ENCODE measurements at regions of chrX and their contacts with region 1.

Region 1: DNA sequence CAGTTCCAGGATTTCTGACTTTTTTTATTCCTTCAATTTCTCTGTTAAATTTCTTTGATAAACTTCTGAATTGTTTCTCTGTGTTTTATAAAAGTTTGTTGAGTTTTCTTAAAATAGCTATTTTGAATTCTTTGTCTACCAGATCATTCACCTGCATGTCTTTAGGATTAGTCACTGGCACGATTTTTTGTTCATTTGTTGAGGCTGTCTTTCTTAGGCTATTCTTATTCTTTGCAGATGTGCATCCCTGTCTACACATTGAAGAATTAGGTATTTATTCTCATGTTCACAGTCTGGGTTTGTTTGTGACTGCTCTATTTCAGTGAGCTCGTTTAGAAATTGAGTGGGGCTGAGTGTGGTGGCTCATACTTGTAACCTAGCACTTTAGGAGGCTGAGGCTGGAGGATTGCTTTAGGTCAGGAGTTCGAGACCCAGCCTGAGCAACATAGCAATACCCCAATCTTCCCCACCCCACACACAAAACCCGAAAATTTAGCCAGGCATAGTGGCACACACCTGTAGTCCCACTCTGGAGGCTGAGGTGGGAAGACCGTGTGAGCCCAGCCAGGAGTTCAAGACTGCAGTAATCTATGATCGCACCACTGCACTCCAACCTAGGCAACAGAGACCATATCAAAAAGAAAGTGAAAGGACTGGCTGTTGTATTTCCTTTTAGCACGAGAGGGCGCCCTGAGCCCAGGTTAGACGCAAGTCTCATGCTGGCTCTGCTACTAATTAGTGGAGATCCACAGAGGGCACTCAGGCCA is 42.0 kb downstream of the F8 start:
- DNase-seq: peak; percentile 47
- ATAC-seq: peak; percentile 99
- H3K4me3 Mint-ChIP-seq: peak overlapping the region; percentile 73
- H3K27ac Mint-ChIP-seq: no peak overlapping the region
- H3K4me1 Mint-ChIP-seq: peaks cover 5% of the 10 kb centered on the region
- H3K27me3 Mint-ChIP-seq: no peaks in the 10 kb centered on the region
- CTCF ChIP-seq: no peak

Region 2: GRCh38 chrX:155026726-155027508 is 46.4 kb after region 1 on chrX and contains the start of gene FUNDC2:
- CTCF ChIA-PET with region 1: no interaction called
- POLR2A ChIA-PET with region 1: no interaction called
- intact Hi-C with region 1: loop called (anchors 1 kb)
- DNase-seq: peak; percentile 83
- ATAC-seq: peak; percentile 86
- H3K4me3 Mint-ChIP-seq: peak within 1 kb of the TSS; percentile 87
- H3K27ac Mint-ChIP-seq: peak within 1 kb of the TSS; percentile 93
- H3K4me1 Mint-ChIP-seq: peaks cover 21% of the 10 kb centered on the region
- H3K27me3 Mint-ChIP-seq: no peaks in the 10 kb centered on the region
- CTCF ChIP-seq: no peak
- total RNA-seq, gene FUNDC2: 62.0 and 67.6 TPM in 2 replicates

Region 3: DNA sequence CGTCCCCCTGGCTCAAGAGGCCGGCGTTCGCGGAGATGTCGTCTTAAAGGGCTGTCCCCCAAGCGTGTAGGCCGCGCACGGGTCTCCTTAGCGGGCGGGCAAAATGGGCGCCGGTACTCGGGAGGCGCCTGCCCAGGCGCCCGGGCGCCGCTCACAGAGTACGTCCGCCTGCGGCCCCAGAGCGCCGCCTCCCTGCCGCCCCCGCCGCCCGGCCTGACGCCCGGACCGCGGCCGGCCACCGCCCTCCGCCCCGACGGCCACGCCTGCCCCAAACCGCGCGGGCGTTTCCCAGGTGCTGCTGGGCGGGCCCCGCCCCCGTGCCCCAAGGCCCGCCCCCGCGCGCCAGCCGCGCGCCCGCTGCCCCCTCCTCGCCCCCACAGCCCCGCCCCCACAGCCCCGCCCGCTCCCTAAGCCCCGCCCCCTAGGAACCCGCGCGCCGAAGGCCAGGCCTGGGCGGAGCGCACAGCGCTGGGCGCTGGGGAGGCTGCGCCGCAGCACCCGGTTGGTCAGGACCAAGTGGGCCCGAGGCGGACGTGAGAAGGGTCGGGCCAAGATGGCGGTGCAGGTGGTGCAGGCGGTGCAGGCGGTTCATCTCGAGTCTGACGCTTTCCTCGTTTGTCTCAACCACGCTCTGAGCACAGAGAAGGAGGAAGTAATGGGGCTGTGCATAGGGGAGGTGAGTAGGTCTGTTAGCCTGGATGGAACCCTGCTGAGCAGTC is 90.6 kb after region 1 on chrX and contains the starts of genes BRCC3, CMC4 and MTCP1:
- CTCF ChIA-PET with region 1: no interaction called
- POLR2A ChIA-PET with region 1: no interaction called
- intact Hi-C with region 1: loop called (anchors 5 kb)
- DNase-seq: peak; percentile 74
- ATAC-seq: peak; percentile 83
- H3K4me3 Mint-ChIP-seq: peak within 1 kb of the TSS; percentile 90
- H3K27ac Mint-ChIP-seq: peak within 1 kb of the TSS; percentile 92
- H3K4me1 Mint-ChIP-seq: peaks cover 45% of the 10 kb centered on the region
- H3K27me3 Mint-ChIP-seq: no peaks in the 10 kb centered on the region
- CTCF ChIP-seq: no peak
- total RNA-seq, gene BRCC3: 20.1 and 21.1 TPM in 2 replicates
- total RNA-seq, gene CMC4: 4.7 and 5.3 TPM in 2 replicates
- total RNA-seq, gene MTCP1: 19.5 and 21.2 TPM in 2 replicates

Region 4: DNA sequence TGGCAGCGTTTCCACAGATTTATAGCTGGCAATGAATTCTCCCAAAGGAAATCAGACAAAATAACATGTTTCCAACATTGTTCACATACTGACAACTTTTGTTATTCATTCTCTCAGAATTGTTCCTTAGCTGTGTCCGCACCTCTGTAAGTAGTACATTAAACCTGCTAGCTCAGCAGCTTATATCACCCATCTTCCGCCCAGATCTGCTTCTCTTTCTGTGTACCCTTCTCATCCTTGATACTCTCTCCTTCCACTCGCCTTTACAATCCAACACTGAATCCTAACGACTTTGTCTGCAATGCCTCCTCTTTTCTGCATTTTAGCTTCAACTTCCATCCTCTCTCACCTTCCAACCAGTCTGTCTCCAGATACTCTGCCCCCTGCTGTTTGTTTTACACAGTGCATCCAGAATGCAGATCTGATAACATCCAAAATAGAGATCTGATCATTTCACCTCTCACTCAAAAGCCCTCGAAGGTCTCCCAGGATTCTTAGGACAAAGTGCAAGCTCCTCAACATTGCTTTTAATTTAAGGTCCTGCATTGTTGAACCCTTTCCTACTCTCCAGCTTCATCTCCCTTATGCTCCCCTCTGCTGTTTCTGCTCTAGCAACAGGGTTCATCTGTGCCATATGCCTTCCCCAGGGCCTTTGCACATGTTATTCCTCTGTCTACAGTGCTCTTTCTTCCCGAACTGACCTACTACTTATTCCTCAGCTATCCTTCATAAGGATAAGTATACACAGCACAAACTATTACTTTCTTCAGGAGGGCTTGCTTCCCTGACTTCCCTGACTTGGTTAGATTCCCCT is 168.4 kb after region 1 on chrX:
- CTCF ChIA-PET with region 1: no interaction called
- POLR2A ChIA-PET with region 1: no interaction called
- intact Hi-C with region 1: loop called (anchors 1 kb)
- DNase-seq: no peak
- ATAC-seq: no peak
- H3K4me3 Mint-ChIP-seq: no peak overlapping the region
- H3K27ac Mint-ChIP-seq: no peak overlapping the region
- H3K4me1 Mint-ChIP-seq: no peaks in the 10 kb centered on the region
- H3K27me3 Mint-ChIP-seq: peaks cover 2% of the 10 kb centered on the region
- CTCF ChIP-seq: no peak

Region 5: DNA sequence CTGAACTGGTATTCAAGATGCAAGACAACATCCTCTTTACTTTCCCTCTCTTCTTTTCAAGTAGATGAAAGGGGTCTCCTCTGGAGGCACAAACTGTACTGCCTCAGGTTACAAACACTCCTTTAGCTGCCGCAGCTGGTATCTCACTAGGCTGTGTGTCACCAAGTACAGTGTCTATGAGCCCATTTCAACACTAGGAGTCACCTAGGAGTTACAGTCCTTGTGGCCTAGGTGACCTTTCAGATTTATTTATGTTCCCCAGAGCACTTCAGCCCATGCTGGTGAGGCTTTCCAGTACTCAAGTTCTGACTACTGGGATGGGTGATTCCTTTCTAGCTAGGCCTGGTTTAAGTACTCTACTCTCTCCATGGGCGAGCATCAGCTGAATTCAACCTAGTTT is 664.7 kb after region 1 on chrX:
- CTCF ChIA-PET with region 1: no interaction called
- POLR2A ChIA-PET with region 1: no interaction called
- intact Hi-C with region 1: loop called (anchors 2 kb)
- DNase-seq: no peak
- ATAC-seq: no peak
- H3K4me3 Mint-ChIP-seq: no peak overlapping the region
- H3K27ac Mint-ChIP-seq: no peak overlapping the region
- H3K4me1 Mint-ChIP-seq: no peaks in the 10 kb centered on the region
- H3K27me3 Mint-ChIP-seq: peaks cover 3% of the 10 kb centered on the region
- CTCF ChIP-seq: no peak

Measured in activated B cell treated with CpG ODN at 0.5 μM for 24 hours (primary cell).